Ascending aorta (tissue), 2 donors: ENCODE measurements at regions of chr21 and their contacts with region 1.

Region 1: GRCh38 chr21:34351786-34352241 is 12.0 kb upstream of the KCNE2 start:
- DNase-seq: peak in 1 of 2 donors; percentile 67
- H3K4me3 ChIP-seq: no peak overlapping the region
- H3K27ac ChIP-seq: no peak overlapping the region
- H3K4me1 ChIP-seq: peaks cover 0 to 17% of the 10 kb centered on the region in 2 donors
- H3K27me3 ChIP-seq: no peaks in the 10 kb centered on the region
- CTCF ChIP-seq: peak; percentile 67 to 83 (median 69)

Region 2: GRCh38 chr21:33924079-33924765 is 427.6 kb before region 1 on chr21:
- intact Hi-C with region 1: loop called (anchors 1 kb)
- DNase-seq: peak in 1 of 2 donors; percentile 91
- H3K4me3 ChIP-seq: peak overlapping the region in 1 of 2 donors; percentile 37
- H3K27ac ChIP-seq: peak overlapping the region; percentile 51 to 62
- H3K4me1 ChIP-seq: peaks cover 0 to 7% of the 10 kb centered on the region in 2 donors
- H3K27me3 ChIP-seq: no peaks in the 10 kb centered on the region
- CTCF ChIP-seq: peak; percentile 87 to 93 (median 90)

Region 3: GRCh38 chr21:34073032-34073869 is 278.6 kb before region 1 on chr21 and contains the starts of genes MRPS6 and SLC5A3:
- intact Hi-C with region 1: loop called (anchors 2 kb)
- DNase-seq: peak in 1 of 2 donors; percentile 90
- H3K4me3 ChIP-seq: peak within 1 kb of the TSS; percentile 75 to 93
- H3K27ac ChIP-seq: peak within 1 kb of the TSS; percentile 74 to 92
- H3K4me1 ChIP-seq: peaks cover 7 to 16% of the 10 kb centered on the region in 2 donors
- H3K27me3 ChIP-seq: no peaks in the 10 kb centered on the region
- CTCF ChIP-seq: no peak
- total RNA-seq, gene MRPS6: 17.8 TPM
- total RNA-seq, gene SLC5A3: 8.4 TPM